T-cell (primary cell): ENCODE measurements at regions of chr2 and their contacts with region 1.

Region 1: GRCh38 chr2:3423492-3424175 is 44.1 kb downstream of the TRAPPC12 start:
- DNase-seq: peak in 34 of 35 experiments; percentile 15 to 77 (median 62)
- ATAC-seq: peak; percentile 47 to 75 (median 68)
- H3K4me3 ChIP-seq: no peak overlapping the region
- H3K4me3 Mint-ChIP-seq: no peak overlapping the region
- H3K27ac ChIP-seq: no peak overlapping the region
- H3K27ac Mint-ChIP-seq: no peak overlapping the region
- H3K4me1 ChIP-seq: peaks cover 0 to 3% of the 10 kb centered on the region in 2 experiments
- H3K4me1 Mint-ChIP-seq: peaks cover 4 to 7% (median 6%) of the 10 kb centered on the region in 3 donors
- H3K27me3 ChIP-seq: no peaks in the 10 kb centered on the region
- H3K27me3 Mint-ChIP-seq: no peaks in the 10 kb centered on the region

Region 2: DNA sequence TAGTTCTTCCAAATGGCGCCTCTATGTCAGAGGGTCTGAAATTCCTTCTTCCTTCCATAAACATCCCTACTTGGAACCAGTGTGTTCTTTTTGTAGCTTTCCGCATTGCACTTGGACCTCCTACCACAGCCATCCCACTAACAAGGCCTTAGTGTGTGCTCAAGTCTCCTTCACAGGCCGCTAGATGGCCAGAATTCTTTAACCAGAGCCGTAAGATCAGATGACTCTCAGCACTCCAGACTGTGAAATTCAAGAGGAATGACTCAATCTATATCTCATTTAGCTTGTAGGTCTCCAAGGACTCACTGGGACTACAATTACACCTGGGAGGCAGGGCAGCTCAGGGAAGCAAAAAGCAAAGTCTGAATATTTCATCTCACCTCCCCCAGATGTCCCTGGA is 345.0 kb before region 1 on chr2:
- CTCF ChIA-PET with region 1: no interaction called
- POLR2A ChIA-PET with region 1: no interaction called
- DNase-seq: no peak
- ATAC-seq: no peak
- H3K4me3 ChIP-seq: no peak overlapping the region
- H3K4me3 Mint-ChIP-seq: no peak overlapping the region
- H3K27ac ChIP-seq: no peak overlapping the region
- H3K27ac Mint-ChIP-seq: no peak overlapping the region
- H3K4me1 ChIP-seq: no peaks in the 10 kb centered on the region
- H3K4me1 Mint-ChIP-seq: no peaks in the 10 kb centered on the region
- H3K27me3 ChIP-seq: peaks cover 0 to 26% of the 10 kb centered on the region in 2 experiments
- H3K27me3 Mint-ChIP-seq: peaks cover 30 to 32% of the 10 kb centered on the region in 2 donors

Region 3: GRCh38 chr2:3442185-3442584 is 18.6 kb after region 1 on chr2:
- CTCF ChIA-PET with region 1: interaction called, 7 to 11 read pairs
- POLR2A ChIA-PET with region 1: no interaction called
- DNase-seq: no peak
- ATAC-seq: no peak
- H3K4me3 ChIP-seq: no peak overlapping the region
- H3K4me3 Mint-ChIP-seq: no peak overlapping the region
- H3K27ac ChIP-seq: no peak overlapping the region
- H3K27ac Mint-ChIP-seq: no peak overlapping the region
- H3K4me1 ChIP-seq: no peaks in the 10 kb centered on the region
- H3K4me1 Mint-ChIP-seq: peaks cover 22 to 35% (median 34%) of the 10 kb centered on the region in 3 donors
- H3K27me3 ChIP-seq: no peaks in the 10 kb centered on the region
- H3K27me3 Mint-ChIP-seq: no peaks in the 10 kb centered on the region

Region 4: GRCh38 chr2:3651691-3652648 is 228.3 kb after region 1 on chr2:
- CTCF ChIA-PET with region 1: interaction called, 11 to 21 read pairs
- POLR2A ChIA-PET with region 1: no interaction called
- DNase-seq: peak; percentile 26 to 78 (median 63)
- ATAC-seq: peak; percentile 65 to 81 (median 76)
- H3K4me3 ChIP-seq: peak overlapping the region; percentile 50 to 62
- H3K4me3 Mint-ChIP-seq: peak overlapping the region; percentile 84 to 85 (median 85)
- H3K27ac ChIP-seq: peak overlapping the region; percentile 36
- H3K27ac Mint-ChIP-seq: peak overlapping the region; percentile 80 to 82
- H3K4me1 ChIP-seq: peaks cover 0 to 17% of the 10 kb centered on the region in 2 experiments
- H3K4me1 Mint-ChIP-seq: peaks cover 13 to 17% (median 14%) of the 10 kb centered on the region in 3 donors
- H3K27me3 ChIP-seq: peaks cover 0 to 29% of the 10 kb centered on the region in 2 experiments
- H3K27me3 Mint-ChIP-seq: no peaks in the 10 kb centered on the region